A549 (cell line): ENCODE measurements at regions of chr5 and their contacts with region 1.

Region 1: DNA sequence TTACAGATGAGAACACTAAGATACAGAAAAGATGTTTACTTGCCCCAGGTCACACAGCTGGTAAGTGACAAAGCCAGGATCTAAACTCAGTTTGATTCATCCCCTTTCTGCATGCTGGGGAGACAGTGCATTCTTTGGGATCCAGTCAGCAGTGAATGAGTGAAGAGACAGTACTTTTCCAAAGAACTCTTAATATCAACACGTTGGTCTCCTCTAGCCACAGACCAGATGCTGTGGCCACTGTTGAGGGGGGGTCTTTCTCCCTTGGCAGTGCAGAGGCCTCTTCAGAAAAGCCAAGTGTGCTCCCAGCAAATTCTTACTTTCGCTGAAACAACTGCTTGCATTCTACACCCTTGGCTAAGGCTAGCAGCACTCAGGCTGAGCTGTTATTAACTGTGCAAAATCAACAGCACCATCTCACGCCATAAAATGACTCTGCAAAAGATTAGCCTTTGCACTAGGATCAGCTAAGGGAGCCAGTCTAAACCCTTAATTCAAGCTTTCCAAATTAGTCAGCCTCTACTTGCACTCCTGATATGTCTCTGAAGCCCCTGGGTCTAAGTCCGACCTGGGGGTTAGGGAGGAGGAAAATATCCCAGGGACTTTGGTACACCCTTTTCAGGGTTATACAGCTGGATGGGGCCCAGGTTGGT is 4.8 kb upstream of the TMEM171 start:
- DNase-seq: peak in 1 of 2 experiments; percentile 25
- ATAC-seq: peak; percentile 62 to 63
- H3K4me3 ChIP-seq: no peak overlapping the region
- H3K27ac ChIP-seq: peak overlapping the region; percentile 60; a peak in 4 of 6 replicates
- H3K4me1 ChIP-seq: peaks cover 26% of the 10 kb centered on the region
- CTCF ChIP-seq: no peak
- EP300 ChIP-seq: no peak
- POLR2A ChIP-seq: no peak
- RAD21 ChIP-seq: 0 out of 5 replicates have a peak, but pooled peaks of 1 of the 2 experiments have one; percentile 21

Region 2: GRCh38 chr5:73103870-73104299 is 11.6 kb before region 1 on chr5:
- CTCF ChIA-PET with region 1: interaction called, 10 read pairs
- POLR2A ChIA-PET with region 1: no interaction called
- DNase-seq: no peak
- ATAC-seq: no peak
- H3K4me3 ChIP-seq: no peak overlapping the region
- H3K27ac ChIP-seq: no peak overlapping the region
- H3K4me1 ChIP-seq: no peaks in the 10 kb centered on the region
- CTCF ChIP-seq: no peak
- EP300 ChIP-seq: no peak
- POLR2A ChIP-seq: no peak
- RAD21 ChIP-seq: no peak

Region 3: GRCh38 chr5:73170522-73170921 is 55.0 kb after region 1 on chr5:
- CTCF ChIA-PET with region 1: no interaction called
- POLR2A ChIA-PET with region 1: no interaction called
- DNase-seq: peak in 1 of 2 experiments; percentile 11
- ATAC-seq: no peak
- H3K4me3 ChIP-seq: no peak overlapping the region
- H3K27ac ChIP-seq: no peak overlapping the region
- H3K4me1 ChIP-seq: no peaks in the 10 kb centered on the region
- CTCF ChIP-seq: no peak; the same call in 2 of the 3 replicates
- EP300 ChIP-seq: no peak
- POLR2A ChIP-seq: no peak
- RAD21 ChIP-seq: peak in 1 of 2 experiments; percentile 26; a peak in 1 of 5 replicates

Region 4: DNA sequence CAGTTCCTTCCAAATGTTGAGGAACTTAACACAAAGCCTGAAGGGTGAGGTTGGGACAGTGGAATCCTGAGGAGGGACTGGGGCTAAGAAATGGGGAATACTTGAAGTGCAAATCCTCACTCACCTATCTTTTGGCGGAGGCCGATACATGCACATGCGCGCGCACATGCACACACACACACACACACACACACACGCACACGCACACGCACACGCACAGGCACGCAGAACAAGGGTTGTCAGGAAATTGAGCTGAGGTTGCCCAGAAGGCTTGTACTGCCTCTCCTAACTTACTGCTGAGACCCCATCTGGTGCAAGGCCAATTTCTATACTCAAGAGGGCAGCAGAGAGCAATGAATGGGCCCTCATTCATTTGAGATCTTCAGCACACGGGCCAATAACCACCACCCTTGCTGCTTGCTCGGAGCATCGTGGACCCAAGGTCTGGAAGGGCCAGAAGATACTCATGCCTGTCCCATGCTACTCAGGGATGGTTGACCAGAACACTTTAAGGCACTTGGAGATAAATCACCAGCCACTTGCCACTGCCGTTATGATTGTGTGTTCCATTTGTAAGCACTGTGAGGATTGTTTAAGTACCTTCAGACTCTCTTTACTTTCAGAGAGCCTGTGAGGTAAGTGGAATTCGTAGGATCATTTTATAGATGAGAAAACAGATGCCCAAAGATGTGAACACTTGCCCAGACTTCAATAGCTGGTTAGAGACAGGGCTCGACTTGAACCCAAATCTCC is 404.2 kb after region 1 on chr5:
- CTCF ChIA-PET with region 1: no interaction called
- POLR2A ChIA-PET with region 1: no interaction called
- DNase-seq: peak; percentile 86 to 93
- ATAC-seq: peak; percentile 99 to 100
- H3K4me3 ChIP-seq: no peak overlapping the region
- H3K27ac ChIP-seq: 0 out of 6 replicates have a peak overlapping the region, but pooled peaks of 1 of the 2 experiments have one; percentile 10
- H3K4me1 ChIP-seq: no peaks in the 10 kb centered on the region; the same call in 2 of the 3 replicates
- CTCF ChIP-seq: peak; percentile 81
- EP300 ChIP-seq: no peak
- POLR2A ChIP-seq: no peak
- RAD21 ChIP-seq: peak; percentile 87 to 93